Common myeloid progenitor, CD34-positive (primary cell): ENCODE measurements at regions of chr7 and their contacts with region 1.

Region 1: GRCh38 chr7:111741811-111742240 is 179.5 kb upstream of the IMMP2L start:
- DNase-seq: peak; percentile 70 to 79 (median 75)
- H3K4me3 ChIP-seq: no peak overlapping the region
- H3K27ac ChIP-seq: no peak overlapping the region
- H3K4me1 ChIP-seq: peaks cover 0 to 5% (median 0%) of the 10 kb centered on the region in 4 experiments
- H3K27me3 ChIP-seq: no peaks in the 10 kb centered on the region

Region 2: DNA sequence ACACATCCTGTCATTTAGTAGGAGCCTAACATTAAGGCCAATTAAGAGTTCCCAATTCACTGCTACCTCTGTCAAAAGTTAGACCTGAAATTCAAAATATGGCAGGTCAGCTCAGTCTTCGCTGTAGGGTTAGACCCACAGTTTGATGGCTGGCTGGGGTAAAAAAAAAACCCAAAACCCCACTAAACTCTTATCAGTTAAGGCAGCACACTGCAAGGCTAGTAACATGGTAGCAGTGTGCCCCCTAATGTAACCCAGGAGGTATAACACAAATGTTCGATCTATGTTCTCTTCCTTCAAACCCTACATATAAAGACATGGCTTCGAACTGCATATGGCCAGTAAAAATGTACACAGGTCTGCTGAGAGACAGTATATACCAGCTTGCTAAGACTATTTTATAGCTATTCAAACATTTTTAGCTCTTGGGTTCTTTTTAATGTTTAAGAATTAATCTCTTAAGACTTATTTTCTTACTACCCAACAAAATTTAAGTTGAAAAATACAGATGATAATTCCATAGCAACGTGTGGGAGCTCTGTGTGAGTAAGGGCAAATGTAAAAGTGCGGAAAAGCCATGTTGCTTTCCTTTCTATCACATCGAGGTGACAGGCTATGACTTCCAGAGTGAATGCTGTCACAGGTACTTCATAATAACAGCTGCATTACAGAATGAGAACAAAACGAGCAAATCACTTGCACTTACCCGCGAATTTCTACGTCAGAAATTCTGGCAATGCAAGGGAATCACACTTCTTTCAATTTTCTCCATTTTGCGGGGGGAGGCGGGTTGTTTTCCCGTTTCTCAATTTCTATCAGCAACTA is 11.1 kb before region 1 on chr7:
- CTCF ChIA-PET with region 1: interaction called, 10 read pairs
- POLR2A ChIA-PET with region 1: no interaction called
- DNase-seq: peak; percentile 22 to 57 (median 53)
- H3K4me3 ChIP-seq: no peak overlapping the region
- H3K27ac ChIP-seq: no peak overlapping the region
- H3K4me1 ChIP-seq: no peaks in the 10 kb centered on the region
- H3K27me3 ChIP-seq: no peaks in the 10 kb centered on the region

Region 3: GRCh38 chr7:111752022-111752582 is 10.3 kb after region 1 on chr7:
- CTCF ChIA-PET with region 1: interaction called, 14 read pairs
- POLR2A ChIA-PET with region 1: no interaction called
- DNase-seq: peak; percentile 53 to 75 (median 69)
- H3K4me3 ChIP-seq: no peak overlapping the region
- H3K27ac ChIP-seq: no peak overlapping the region
- H3K4me1 ChIP-seq: no peaks in the 10 kb centered on the region
- H3K27me3 ChIP-seq: no peaks in the 10 kb centered on the region

Region 4: GRCh38 chr7:111771638-111772037 is 29.8 kb after region 1 on chr7:
- CTCF ChIA-PET with region 1: no interaction called
- POLR2A ChIA-PET with region 1: no interaction called
- DNase-seq: no peak
- H3K4me3 ChIP-seq: no peak overlapping the region
- H3K27ac ChIP-seq: no peak overlapping the region
- H3K4me1 ChIP-seq: no peaks in the 10 kb centered on the region
- H3K27me3 ChIP-seq: no peaks in the 10 kb centered on the region

Region 5: DNA sequence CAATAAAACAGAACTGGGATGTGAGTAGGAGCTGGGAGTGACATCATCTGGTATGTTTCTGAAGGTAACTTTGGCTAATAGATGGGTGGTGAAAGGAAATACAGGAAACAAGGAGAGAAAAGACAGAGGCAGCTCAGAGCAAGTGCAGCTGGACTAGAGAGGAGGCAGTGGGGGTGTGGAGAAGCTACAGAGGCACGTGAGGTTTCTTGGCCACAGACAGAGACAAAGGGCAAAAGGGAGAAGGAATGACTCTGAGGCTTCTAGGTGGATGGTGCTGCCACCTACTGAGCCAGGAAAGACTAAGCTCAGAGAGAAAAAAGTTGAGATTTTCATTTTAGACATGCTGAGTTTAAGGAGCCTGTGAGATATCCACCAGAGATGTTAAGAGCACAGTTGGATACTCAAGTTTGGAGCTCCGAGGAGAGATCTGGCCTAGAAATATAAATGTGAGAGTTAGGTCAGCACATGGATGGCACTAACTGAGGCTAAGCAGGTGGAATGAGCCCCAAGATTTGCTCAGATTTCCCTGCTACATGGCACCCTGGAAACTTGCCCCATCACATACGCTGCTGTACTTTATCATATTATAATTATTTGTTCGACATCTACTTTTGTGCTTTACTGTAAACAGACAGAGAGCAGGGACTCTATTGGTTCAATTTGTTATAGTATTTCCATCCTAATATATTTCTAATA is 113.5 kb after region 1 on chr7:
- CTCF ChIA-PET with region 1: interaction called, 46 read pairs
- POLR2A ChIA-PET with region 1: no interaction called
- DNase-seq: peak; percentile 52 to 73 (median 69)
- H3K4me3 ChIP-seq: no peak overlapping the region
- H3K27ac ChIP-seq: no peak overlapping the region
- H3K4me1 ChIP-seq: peaks cover 0 to 3% (median 0%) of the 10 kb centered on the region in 4 experiments
- H3K27me3 ChIP-seq: no peaks in the 10 kb centered on the region